Activated CD4-positive, alpha-beta T cell treated with anti-CD3 and anti-CD28 coated beads, Interleukin-2, amount 10 ng/mL, durations not matched to agents 24 days and 14 days (primary cell): ENCODE measurements at regions of chr17 and their contacts with region 1.

Region 1: GRCh38 chr17:64320613-64321553 is 57.8 kb upstream of the TEX2 start:
- DNase-seq: peak; percentile 88
- H3K4me3 Mint-ChIP-seq: peak overlapping the region; percentile 55
- H3K27ac Mint-ChIP-seq: no peak overlapping the region
- H3K4me1 Mint-ChIP-seq: peaks cover 2% of the 10 kb centered on the region
- H3K27me3 Mint-ChIP-seq: peaks cover 8% of the 10 kb centered on the region

Region 2: DNA sequence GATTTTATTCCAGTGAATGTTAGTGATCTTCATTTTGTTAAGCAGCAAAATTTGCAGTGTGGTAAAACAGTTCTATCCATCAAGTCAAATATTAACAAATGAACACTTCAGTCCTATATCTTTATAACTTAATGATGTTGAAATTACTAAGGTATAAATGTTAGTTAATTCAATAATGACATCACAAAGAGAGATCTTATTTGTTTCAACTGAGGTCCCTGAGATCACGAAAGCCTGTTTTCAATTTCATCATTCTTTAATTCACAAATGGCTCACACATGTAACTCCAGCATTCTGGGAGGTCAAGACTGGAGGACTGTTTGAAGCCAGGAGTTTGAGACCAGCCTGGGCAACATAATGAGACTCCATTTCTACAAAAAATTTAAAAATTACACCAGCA is 327.4 kb after region 1 on chr17:
- intact Hi-C with region 1: loop called (anchors 10 kb)
- DNase-seq: no peak
- H3K4me3 Mint-ChIP-seq: no peak overlapping the region
- H3K27ac Mint-ChIP-seq: peak overlapping the region; percentile 34
- H3K4me1 Mint-ChIP-seq: peaks cover 18% of the 10 kb centered on the region
- H3K27me3 Mint-ChIP-seq: no peaks in the 10 kb centered on the region